Breast epithelium (tissue), 4 donors: ENCODE measurements at regions of chr5 and their contacts with region 1.

Region 1: GRCh38 chr5:124952079-124952478 is 205.6 kb upstream of the ZNF608 start:
- DNase-seq: no peak
- H3K4me3 ChIP-seq: no peak overlapping the region
- H3K27ac ChIP-seq: no peak overlapping the region
- H3K4me1 ChIP-seq: no peaks in the 10 kb centered on the region
- H3K27me3 ChIP-seq: no peaks in the 10 kb centered on the region
- CTCF ChIP-seq: no peak
- POLR2A ChIP-seq: no peak

Region 2: DNA sequence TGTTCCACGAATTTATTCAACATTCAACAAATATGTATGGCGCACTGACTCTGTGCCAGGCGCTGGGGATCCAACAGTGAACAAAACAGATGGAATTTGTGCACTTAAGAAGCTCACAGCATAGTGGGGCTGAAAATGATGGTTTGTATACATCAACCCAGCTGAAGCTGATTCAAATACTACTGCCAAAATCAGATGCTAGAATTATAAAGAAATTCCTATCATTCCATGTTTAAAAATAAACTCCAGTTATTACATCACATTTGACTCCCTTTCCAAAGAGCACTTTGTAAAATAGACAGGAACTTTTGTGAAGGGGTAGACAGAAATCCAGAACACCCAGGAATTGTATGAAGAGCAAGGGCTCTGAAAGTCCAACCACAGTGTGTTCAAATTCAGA is 259.8 kb before region 1 on chr5:
- intact Hi-C with region 1: no loop called
- DNase-seq: no peak
- H3K4me3 ChIP-seq: no peak overlapping the region
- H3K27ac ChIP-seq: no peak overlapping the region
- H3K4me1 ChIP-seq: peaks cover 0 to 8% of the 10 kb centered on the region in 2 donors
- H3K27me3 ChIP-seq: no peaks in the 10 kb centered on the region
- CTCF ChIP-seq: no peak
- POLR2A ChIP-seq: no peak

Region 3: GRCh38 chr5:124979251-124979650 is 27.2 kb after region 1 on chr5:
- intact Hi-C with region 1: loop called (anchors 2 kb)
- DNase-seq: no peak
- H3K4me3 ChIP-seq: no peak overlapping the region
- H3K27ac ChIP-seq: peak overlapping the region; percentile 63 to 64
- H3K4me1 ChIP-seq: peaks cover 0 to 8% of the 10 kb centered on the region in 2 donors
- H3K27me3 ChIP-seq: no peaks in the 10 kb centered on the region
- CTCF ChIP-seq: no peak
- POLR2A ChIP-seq: no peak

Region 4: GRCh38 chr5:125006011-125006685 is 54.1 kb after region 1 on chr5:
- intact Hi-C with region 1: loop called (anchors 2 kb)
- DNase-seq: no peak
- H3K4me3 ChIP-seq: no peak overlapping the region
- H3K27ac ChIP-seq: no peak overlapping the region
- H3K4me1 ChIP-seq: no peaks in the 10 kb centered on the region
- H3K27me3 ChIP-seq: no peaks in the 10 kb centered on the region
- CTCF ChIP-seq: no peak
- POLR2A ChIP-seq: no peak